ENCODE measurements at regions of chr9 and their contacts with region 1.

Region 1: DNA sequence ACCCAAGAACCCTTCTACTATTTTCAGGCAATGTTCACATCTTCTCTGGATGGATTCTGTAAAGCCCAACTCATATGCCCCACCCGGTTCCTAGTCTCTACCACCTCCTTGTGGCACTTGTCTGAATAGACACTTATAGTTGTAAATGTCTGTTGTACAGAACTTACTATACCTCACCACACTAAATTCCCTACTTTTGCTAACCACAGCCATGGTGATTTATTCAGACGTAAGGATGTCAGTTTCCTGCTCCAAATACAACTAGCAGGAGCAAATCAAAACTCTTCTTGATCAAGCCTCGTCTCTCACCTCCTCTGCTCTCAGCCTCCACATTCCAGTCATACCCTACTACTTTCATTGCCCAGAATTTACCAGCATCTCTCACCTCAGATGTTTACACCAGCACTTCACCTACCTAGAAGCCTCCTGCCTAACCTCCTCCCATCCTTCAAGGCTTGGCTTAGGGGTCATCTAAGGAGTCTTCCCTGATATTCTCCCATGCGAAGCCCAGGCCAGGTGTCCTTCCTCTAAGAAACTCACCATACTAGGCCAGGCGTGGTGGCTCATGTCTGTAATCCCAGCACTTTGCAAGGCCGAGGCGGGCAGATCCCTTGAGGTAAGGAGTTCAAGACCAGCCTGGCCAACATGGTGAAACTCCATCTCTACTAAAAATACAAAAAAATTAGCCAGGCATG is 75.5 kb downstream of the MAPKAP1 start:
- DNase-seq: peak; percentile 38
- H3K4me3 Mint-ChIP-seq: no peak overlapping the region
- H3K27ac Mint-ChIP-seq: peak overlapping the region; percentile 58
- H3K4me1 Mint-ChIP-seq: peaks cover 76% of the 10 kb centered on the region
- H3K27me3 Mint-ChIP-seq: no peaks in the 10 kb centered on the region

Region 2: GRCh38 chr9:125407974-125408900 is 223.3 kb before region 1 on chr9:
- CTCF ChIA-PET with region 1: interaction called, 12 read pairs
- POLR2A ChIA-PET with region 1: no interaction called
- intact Hi-C with region 1: loop called (anchors 1 kb)
- DNase-seq: peak; percentile 82
- H3K4me3 Mint-ChIP-seq: peak overlapping the region; percentile 52
- H3K27ac Mint-ChIP-seq: no peak overlapping the region
- H3K4me1 Mint-ChIP-seq: peaks cover 10% of the 10 kb centered on the region
- H3K27me3 Mint-ChIP-seq: peaks cover 24% of the 10 kb centered on the region

Region 3: DNA sequence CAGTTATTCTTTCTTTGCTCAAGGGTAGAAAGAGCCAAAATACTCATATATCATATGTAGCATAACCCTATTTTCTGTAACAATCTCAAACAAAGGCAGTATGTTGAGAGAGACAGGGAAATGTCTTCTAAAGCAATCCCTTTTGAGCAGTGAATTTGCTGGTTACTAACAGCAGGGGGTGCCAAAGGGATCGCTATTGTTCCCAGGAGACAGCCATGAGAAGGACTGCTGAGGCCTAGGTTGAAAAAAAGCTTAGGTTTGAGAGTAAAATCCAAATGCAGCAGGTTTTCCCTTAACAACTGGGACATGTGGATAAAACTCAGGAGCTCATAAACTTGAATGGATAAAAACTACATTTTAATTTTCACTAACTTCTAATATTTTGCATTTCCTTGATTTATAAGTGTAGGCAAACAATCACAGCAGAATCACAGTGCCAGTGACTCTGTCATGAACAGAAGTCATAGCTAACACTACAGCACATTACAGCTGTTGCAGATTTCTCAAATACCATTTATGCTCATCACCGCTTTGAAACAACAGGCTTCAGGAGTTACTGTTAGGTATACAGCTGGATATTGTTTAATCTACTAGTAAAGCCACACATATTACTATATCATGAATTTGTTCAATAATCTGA is 73.0 kb before region 1 on chr9:
- CTCF ChIA-PET with region 1: interaction called, 10 read pairs
- POLR2A ChIA-PET with region 1: no interaction called
- intact Hi-C with region 1: loop called (anchors 1 kb)
- DNase-seq: peak; percentile 64
- H3K4me3 Mint-ChIP-seq: no peak overlapping the region
- H3K27ac Mint-ChIP-seq: no peak overlapping the region
- H3K4me1 Mint-ChIP-seq: peaks cover 13% of the 10 kb centered on the region
- H3K27me3 Mint-ChIP-seq: no peaks in the 10 kb centered on the region

Region 4: GRCh38 chr9:125579030-125579932 is 52.3 kb before region 1 on chr9:
- CTCF ChIA-PET with region 1: no interaction called
- POLR2A ChIA-PET with region 1: no interaction called
- intact Hi-C with region 1: no loop called
- DNase-seq: no peak
- H3K4me3 Mint-ChIP-seq: no peak overlapping the region
- H3K27ac Mint-ChIP-seq: no peak overlapping the region
- H3K4me1 Mint-ChIP-seq: no peaks in the 10 kb centered on the region
- H3K27me3 Mint-ChIP-seq: no peaks in the 10 kb centered on the region

Region 5: DNA sequence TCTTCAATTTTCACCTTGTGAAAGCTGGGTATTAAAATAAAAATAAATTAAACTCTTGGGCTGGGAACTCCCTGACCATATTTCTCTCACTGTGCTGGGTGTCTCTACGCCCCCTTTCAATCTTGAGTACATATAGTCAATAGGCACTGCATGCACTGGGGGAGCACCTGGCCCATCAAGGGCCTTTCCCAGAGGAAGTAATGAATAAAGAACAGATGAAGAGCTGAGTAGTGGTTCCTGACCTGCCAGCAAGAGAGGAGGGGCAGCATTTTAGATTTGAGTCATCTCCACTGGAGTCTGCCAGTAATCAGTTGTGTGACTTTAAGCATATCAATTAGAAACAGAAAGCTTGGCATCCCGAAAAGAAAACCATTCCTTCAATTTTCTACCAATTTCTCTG is 69.3 kb after region 1 on chr9:
- CTCF ChIA-PET with region 1: no interaction called
- POLR2A ChIA-PET with region 1: no interaction called
- intact Hi-C with region 1: loop called (anchors 1 kb)
- DNase-seq: peak; percentile 71
- H3K4me3 Mint-ChIP-seq: peak overlapping the region; percentile 3
- H3K27ac Mint-ChIP-seq: peak overlapping the region; percentile 44
- H3K4me1 Mint-ChIP-seq: peaks cover 55% of the 10 kb centered on the region
- H3K27me3 Mint-ChIP-seq: no peaks in the 10 kb centered on the region

Region 6: DNA sequence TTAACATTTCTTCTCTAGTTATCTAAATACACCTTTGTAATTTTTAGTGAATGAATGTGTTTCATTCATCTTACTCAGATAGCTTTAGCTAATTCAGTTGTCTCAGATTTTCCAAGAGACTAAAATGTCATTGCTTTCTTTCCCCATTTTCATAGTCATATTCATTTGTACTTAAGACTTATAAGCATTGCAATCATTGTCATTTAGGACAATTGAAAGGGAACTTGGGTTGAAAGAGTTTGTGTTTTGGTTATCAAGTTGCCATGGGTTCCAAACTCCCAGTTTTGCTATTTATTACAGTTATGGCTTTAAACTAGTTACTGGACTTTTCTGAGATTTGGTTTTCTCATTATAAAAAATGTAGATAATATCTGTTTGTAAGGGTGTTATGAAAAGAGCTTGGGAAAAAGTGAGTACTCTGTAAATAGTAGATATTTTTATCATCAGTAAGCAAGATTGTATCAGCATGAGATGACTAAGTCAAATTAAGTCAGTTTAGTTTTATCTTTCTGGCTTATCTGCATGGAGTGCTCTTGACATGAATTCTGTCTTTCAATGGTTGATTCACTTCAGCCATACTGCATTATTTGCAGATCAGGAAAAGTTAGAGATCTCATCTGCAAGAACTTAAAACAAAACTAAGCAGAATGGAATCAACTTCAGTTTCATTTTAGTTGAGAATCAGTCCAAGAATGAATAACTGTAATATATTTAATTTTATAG is 223.2 kb after region 1 on chr9:
- CTCF ChIA-PET with region 1: no interaction called
- POLR2A ChIA-PET with region 1: no interaction called
- intact Hi-C with region 1: loop called (anchors 10 kb)
- DNase-seq: no peak
- H3K4me3 Mint-ChIP-seq: no peak overlapping the region
- H3K27ac Mint-ChIP-seq: no peak overlapping the region
- H3K4me1 Mint-ChIP-seq: peaks cover 13% of the 10 kb centered on the region
- H3K27me3 Mint-ChIP-seq: no peaks in the 10 kb centered on the region